Ascending aorta (tissue), 2 donors: ENCODE measurements at regions of chr6 and their contacts with region 1.

Region 1: GRCh38 chr6:11232193-11232769 is at the start of gene NEDD9:
- DNase-seq: peak; percentile 95 to 99
- H3K4me3 ChIP-seq: peak within 1 kb of the TSS; percentile 77 to 98
- H3K27ac ChIP-seq: peak within 1 kb of the TSS; percentile 91 to 95
- H3K4me1 ChIP-seq: peaks cover 10 to 16% of the 10 kb centered on the region in 2 donors
- H3K27me3 ChIP-seq: no peaks in the 10 kb centered on the region
- CTCF ChIP-seq: no peak
- total RNA-seq, gene NEDD9: 150 TPM

Region 2: GRCh38 chr6:11194356-11195218 is 37.7 kb before region 1 on chr6:
- intact Hi-C with region 1: loop called (anchors 5 kb)
- DNase-seq: peak in 1 of 2 donors; percentile 79
- H3K4me3 ChIP-seq: peak overlapping the region in 1 of 2 donors; percentile 4
- H3K27ac ChIP-seq: peak overlapping the region; percentile 70 to 83
- H3K4me1 ChIP-seq: peaks cover 6 to 50% of the 10 kb centered on the region in 2 donors
- H3K27me3 ChIP-seq: no peaks in the 10 kb centered on the region
- CTCF ChIP-seq: no peak

Region 3: GRCh38 chr6:11263291-11263775 is 31.1 kb after region 1 on chr6:
- intact Hi-C with region 1: loop called (anchors 2 kb)
- DNase-seq: peak; percentile 37 to 90
- H3K4me3 ChIP-seq: peak overlapping the region in 1 of 2 donors; percentile 40
- H3K27ac ChIP-seq: peak overlapping the region; percentile 71 to 80
- H3K4me1 ChIP-seq: peaks cover 9 to 24% of the 10 kb centered on the region in 2 donors
- H3K27me3 ChIP-seq: no peaks in the 10 kb centered on the region
- CTCF ChIP-seq: no peak

Region 4: GRCh38 chr6:11317885-11318771 is 85.8 kb after region 1 on chr6:
- intact Hi-C with region 1: loop called (anchors 2 kb)
- DNase-seq: peak; percentile 56 to 93
- H3K4me3 ChIP-seq: no peak overlapping the region
- H3K27ac ChIP-seq: peak overlapping the region; percentile 84 to 90
- H3K4me1 ChIP-seq: peaks cover 6 to 18% of the 10 kb centered on the region in 2 donors
- H3K27me3 ChIP-seq: no peaks in the 10 kb centered on the region
- CTCF ChIP-seq: no peak

Region 5: DNA sequence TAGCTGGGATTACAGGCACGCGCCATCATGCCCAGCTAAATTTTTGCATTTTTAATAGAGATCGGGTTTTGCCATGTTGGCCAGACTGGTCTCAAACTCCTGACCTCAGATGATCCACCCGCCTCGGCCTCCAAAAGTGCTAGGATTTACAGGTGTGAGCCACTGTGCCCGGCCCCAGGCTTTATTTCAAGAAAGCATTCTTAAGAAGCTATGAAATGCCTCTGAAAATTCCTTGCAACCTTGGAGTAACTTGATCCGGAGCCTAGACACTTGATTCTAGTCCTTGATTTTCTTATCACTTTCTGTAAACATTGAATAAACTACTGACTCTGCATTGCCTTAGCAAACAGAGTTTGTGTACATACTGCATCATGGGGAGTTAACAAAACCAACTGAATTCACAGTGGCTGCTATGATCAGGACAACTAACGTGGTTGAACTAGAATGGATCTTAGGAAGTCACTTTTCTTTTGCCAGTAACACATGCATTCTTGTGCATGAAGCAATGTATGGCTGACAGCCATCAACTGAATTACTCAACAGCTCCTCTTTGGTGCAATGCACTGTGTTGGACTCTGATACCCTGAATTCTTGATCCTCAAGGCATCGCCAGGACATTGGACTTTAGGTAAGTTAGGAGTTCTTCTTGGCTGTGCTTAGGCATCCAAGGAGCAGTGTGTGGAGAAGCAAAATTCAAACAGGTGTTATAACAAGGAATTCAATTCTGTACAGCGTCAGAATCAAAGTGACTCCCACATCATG is 202.5 kb after region 1 on chr6:
- intact Hi-C with region 1: loop called (anchors 5 kb)
- DNase-seq: peak in 1 of 2 donors; percentile 91
- H3K4me3 ChIP-seq: no peak overlapping the region
- H3K27ac ChIP-seq: peak overlapping the region; percentile 83 to 92
- H3K4me1 ChIP-seq: peaks cover 12 to 58% of the 10 kb centered on the region in 2 donors
- H3K27me3 ChIP-seq: no peaks in the 10 kb centered on the region
- CTCF ChIP-seq: no peak